MCF 10A (cell line): ENCODE measurements at regions of chr17 and their contacts with region 1.

Region 1: DNA sequence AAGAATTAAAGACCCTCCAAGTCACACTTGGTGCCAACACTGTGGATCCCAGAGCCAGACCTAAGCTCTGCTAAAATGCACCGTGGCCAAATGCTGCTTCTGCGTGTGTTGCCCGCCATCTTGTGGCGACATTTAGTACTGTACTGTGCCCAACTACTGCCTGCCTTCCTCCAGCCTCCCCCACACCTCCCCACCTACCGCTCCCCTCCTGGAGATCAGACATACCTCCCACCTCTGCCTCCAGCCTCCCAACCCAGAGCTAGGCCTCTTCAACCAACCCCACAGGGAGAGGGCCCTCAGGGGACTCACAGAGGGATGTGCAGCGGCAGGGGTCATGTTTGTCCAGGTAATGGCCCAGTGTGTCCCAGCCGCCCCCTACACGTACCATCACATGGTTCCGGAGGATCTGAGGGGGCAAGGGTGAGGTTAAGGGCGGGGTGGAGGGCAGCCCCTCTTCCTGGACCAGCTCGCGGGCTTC is 5.5 kb downstream of the GAS2L2 start:
- DNase-seq: peak; percentile 80
- H3K4me3 Mint-ChIP-seq: no peak overlapping the region
- H3K27ac Mint-ChIP-seq: no peak overlapping the region
- H3K4me1 Mint-ChIP-seq: peaks cover 10% of the 10 kb centered on the region
- H3K27me3 Mint-ChIP-seq: peaks cover 16% of the 10 kb centered on the region
- CTCF ChIP-seq: peak; percentile 95

Region 2: DNA sequence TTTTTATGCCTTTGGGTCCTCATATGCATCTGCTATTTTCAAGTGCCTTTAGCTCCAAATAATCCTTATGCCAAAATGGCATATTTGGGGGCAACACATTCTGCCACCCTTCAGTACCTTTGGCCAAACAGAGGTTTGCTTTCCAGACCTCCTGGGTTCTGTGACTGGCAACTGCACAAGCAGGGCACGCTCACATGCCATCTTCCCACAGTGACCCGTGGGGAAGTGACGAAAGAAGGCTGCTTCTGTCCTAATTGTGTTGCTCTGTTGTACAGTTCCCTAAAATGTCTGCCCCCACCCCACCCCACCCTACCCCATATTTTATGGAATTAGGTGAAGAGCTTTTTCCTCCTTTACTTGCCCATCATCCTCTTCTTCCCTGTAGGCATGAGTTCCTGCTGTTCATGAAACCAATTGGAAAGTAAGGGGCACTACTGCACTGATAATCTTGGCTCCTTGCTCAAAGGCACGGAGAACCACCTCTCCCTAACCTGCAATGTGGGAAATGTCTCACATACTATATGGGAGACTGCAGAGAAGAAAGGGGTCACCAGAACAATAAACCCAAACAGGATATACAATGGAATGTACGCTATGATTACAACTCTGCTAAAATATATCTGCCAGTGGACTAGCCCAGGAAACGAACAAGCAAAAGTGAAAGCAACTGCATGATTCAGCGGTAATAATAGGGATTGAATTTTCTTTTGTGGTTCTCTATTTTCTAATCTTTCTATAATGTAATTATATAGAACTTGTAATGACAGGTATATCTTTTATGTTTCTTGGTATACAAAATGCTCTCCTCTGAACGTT is 206.8 kb before region 1 on chr17:
- CTCF ChIA-PET with region 1: no interaction called
- POLR2A ChIA-PET with region 1: no interaction called
- intact Hi-C with region 1: loop called (anchors 5 kb)
- DNase-seq: peak; percentile 27
- H3K4me3 Mint-ChIP-seq: peak overlapping the region; percentile 43
- H3K27ac Mint-ChIP-seq: no peak overlapping the region
- H3K4me1 Mint-ChIP-seq: no peaks in the 10 kb centered on the region
- H3K27me3 Mint-ChIP-seq: peaks cover 11% of the 10 kb centered on the region
- CTCF ChIP-seq: no peak

Region 3: GRCh38 chr17:35621768-35622167 is 125.8 kb before region 1 on chr17:
- CTCF ChIA-PET with region 1: interaction called, 10 read pairs
- POLR2A ChIA-PET with region 1: no interaction called
- intact Hi-C with region 1: no loop called
- DNase-seq: no peak
- H3K4me3 Mint-ChIP-seq: no peak overlapping the region
- H3K27ac Mint-ChIP-seq: no peak overlapping the region
- H3K4me1 Mint-ChIP-seq: no peaks in the 10 kb centered on the region
- H3K27me3 Mint-ChIP-seq: no peaks in the 10 kb centered on the region
- CTCF ChIP-seq: no peak

Region 4: DNA sequence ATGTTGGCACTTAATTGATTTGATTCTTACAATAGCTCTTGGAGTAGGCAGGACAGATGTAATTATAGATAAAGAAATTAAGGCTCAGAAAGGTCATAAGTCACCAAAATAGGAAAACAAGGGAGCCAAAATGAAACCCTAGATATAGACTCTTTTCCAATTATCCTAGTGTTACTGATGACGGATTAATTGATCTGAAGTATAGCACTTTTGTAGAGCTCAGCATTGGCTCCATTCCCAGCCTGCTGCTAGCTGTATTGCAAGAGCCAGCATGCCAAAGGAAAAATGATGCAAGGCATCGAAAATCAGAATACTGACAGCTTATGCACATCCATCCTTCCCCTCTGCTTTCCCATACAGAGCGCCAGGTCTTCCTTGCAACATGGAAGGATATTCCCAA is 37.7 kb before region 1 on chr17:
- CTCF ChIA-PET with region 1: interaction called, 23 read pairs
- POLR2A ChIA-PET with region 1: no interaction called
- intact Hi-C with region 1: no loop called
- DNase-seq: peak; percentile 25
- H3K4me3 Mint-ChIP-seq: no peak overlapping the region
- H3K27ac Mint-ChIP-seq: peak overlapping the region; percentile 31
- H3K4me1 Mint-ChIP-seq: no peaks in the 10 kb centered on the region
- H3K27me3 Mint-ChIP-seq: no peaks in the 10 kb centered on the region
- CTCF ChIP-seq: no peak

Region 5: GRCh38 chr17:35764123-35764991 is 16.8 kb after region 1 on chr17:
- CTCF ChIA-PET with region 1: interaction called, 23 read pairs
- POLR2A ChIA-PET with region 1: interaction called, 3 read pairs
- intact Hi-C with region 1: no loop called
- DNase-seq: peak; percentile 87
- H3K4me3 Mint-ChIP-seq: peak overlapping the region; percentile 75
- H3K27ac Mint-ChIP-seq: peak overlapping the region; percentile 87
- H3K4me1 Mint-ChIP-seq: peaks cover 13% of the 10 kb centered on the region
- H3K27me3 Mint-ChIP-seq: no peaks in the 10 kb centered on the region
- CTCF ChIP-seq: peak; percentile 92

Region 6: GRCh38 chr17:35778641-35779196 is 31.1 kb after region 1 on chr17:
- CTCF ChIA-PET with region 1: no interaction called
- POLR2A ChIA-PET with region 1: no interaction called
- intact Hi-C with region 1: no loop called
- DNase-seq: peak; percentile 70
- H3K4me3 Mint-ChIP-seq: peak overlapping the region; percentile 62
- H3K27ac Mint-ChIP-seq: peak overlapping the region; percentile 82
- H3K4me1 Mint-ChIP-seq: peaks cover 48% of the 10 kb centered on the region
- H3K27me3 Mint-ChIP-seq: no peaks in the 10 kb centered on the region
- CTCF ChIP-seq: no peak